Heart left ventricle (tissue), 16 donors: ENCODE measurements at regions of chr17 and their contacts with region 1.

Region 1: DNA sequence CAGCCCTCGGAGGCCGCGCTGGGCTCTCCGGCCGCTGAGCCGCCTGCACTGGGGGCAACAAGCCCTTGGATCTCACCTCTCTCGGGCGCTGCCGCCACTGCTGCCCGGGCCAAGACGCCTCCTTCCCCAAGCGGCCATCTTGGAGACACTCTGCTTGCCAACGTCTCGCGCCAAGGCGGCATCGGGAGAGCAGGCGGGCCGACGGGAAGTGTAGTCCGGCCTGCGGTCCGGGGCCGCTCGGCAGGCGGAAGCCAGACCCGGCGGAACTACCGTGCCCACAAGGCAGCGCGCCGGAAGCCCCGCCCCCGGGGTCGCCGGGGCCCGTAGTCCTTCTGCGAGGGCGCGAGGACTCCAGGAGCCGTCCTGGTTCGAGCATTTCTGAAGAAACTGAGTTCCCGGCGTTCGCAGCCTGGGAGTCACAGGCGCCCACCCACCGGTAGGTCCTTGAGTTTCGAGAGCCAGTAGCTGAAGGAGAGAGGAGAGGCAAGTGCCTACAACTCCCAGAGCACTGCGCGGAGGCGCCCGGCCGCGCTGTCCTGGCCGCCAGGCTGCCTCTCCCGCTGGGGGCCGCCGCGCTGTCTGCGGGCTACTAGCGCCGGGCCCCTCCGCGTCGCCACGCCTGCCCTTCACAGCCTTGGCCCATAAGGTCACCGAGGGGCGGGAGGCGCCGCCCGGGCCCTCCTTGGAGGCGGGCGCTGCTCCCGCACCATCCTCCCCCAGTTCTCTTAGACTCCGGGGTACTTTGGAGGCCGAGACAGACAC is at the start of gene TMEM11:
- DNase-seq: peak; percentile 96 to 99 (median 98)
- ATAC-seq: peak; percentile 92 to 96 (median 96)
- H3K4me3 ChIP-seq: peak within 1 kb of the TSS; percentile 65 to 100 (median 89)
- H3K27ac ChIP-seq: peak within 1 kb of the TSS; percentile 88 to 99 (median 97)
- H3K4me1 ChIP-seq: peaks cover 6 to 58% (median 49%) of the 10 kb centered on the region in 12 donors
- H3K27me3 ChIP-seq: no peaks in the 10 kb centered on the region
- CTCF ChIP-seq: peak in 5 of 12 donors; percentile 16 to 42 (median 29)
- POLR2A ChIP-seq: peak in 1 of 2 donors; percentile 70
- total RNA-seq, gene TMEM11: 23.2 to 46.6 (median 32.0) TPM

Region 2: GRCh38 chr17:21043286-21044232 is 170.6 kb before region 1 on chr17:
- intact Hi-C with region 1: loop called in 2 of 10 experiments (anchors 2 to 5 kb)
- DNase-seq: peak; percentile 99
- ATAC-seq: peak; percentile 93 to 98 (median 97)
- H3K4me3 ChIP-seq: peak overlapping the region; percentile 28 to 97 (median 71)
- H3K27ac ChIP-seq: peak overlapping the region; percentile 82 to 100 (median 96)
- H3K4me1 ChIP-seq: peaks cover 0 to 42% (median 29%) of the 10 kb centered on the region in 12 donors
- H3K27me3 ChIP-seq: no peaks in the 10 kb centered on the region
- CTCF ChIP-seq: peak; percentile 72 to 98 (median 90)
- POLR2A ChIP-seq: peak in 1 of 2 donors; percentile 77

Region 3: GRCh38 chr17:21119247-21119918 is 94.8 kb before region 1 on chr17:
- intact Hi-C with region 1: loop called in 4 of 10 experiments (anchors 2 to 10 kb)
- DNase-seq: peak; percentile 67 to 75 (median 70)
- ATAC-seq: peak; percentile 47 to 86 (median 79)
- H3K4me3 ChIP-seq: peak overlapping the region in 4 of 12 donors; percentile 8 to 31 (median 17)
- H3K27ac ChIP-seq: peak overlapping the region in 2 of 12 donors; percentile 58 to 68
- H3K4me1 ChIP-seq: peaks cover 0 to 19% (median 4%) of the 10 kb centered on the region in 12 donors
- H3K27me3 ChIP-seq: no peaks in the 10 kb centered on the region
- CTCF ChIP-seq: peak; percentile 73 to 88 (median 78)
- POLR2A ChIP-seq: no peak

Region 4: DNA sequence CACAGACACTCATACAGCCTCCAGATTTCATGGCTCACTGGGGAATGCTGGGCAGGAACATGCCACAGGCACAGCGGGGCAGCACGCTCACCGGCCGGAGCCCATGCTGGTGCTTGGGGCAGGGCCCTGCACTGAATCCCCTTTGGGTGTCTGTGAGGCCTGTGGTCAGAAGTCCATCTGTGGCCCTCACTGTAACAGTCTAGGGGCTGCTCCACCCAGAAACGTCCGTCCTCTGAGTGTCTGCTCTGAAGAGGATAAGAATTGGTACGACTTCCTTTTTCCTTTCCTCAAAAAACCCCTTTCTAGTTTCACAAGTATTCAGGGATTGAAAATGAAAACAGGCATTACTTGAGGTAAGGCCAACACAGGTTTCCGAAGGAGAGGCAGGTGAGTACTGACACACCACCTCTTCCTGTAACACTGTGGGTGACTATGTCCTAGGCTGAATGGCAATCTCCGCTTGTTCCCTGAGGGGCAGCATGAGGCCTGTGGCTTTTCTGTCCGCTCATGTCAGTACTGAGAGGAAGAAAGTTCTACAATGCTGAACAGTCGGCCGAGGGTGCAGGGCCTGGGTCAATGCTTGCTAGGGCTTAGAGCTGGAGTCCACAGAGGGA is 42.8 kb before region 1 on chr17:
- intact Hi-C with region 1: loop called in 5 of 10 experiments (anchors 2 to 5 kb)
- DNase-seq: no peak
- ATAC-seq: no peak
- H3K4me3 ChIP-seq: no peak overlapping the region
- H3K27ac ChIP-seq: peak overlapping the region in 7 of 12 donors; percentile 14 to 64 (median 31)
- H3K4me1 ChIP-seq: peaks cover 0 to 67% (median 45%) of the 10 kb centered on the region in 12 donors
- H3K27me3 ChIP-seq: no peaks in the 10 kb centered on the region
- CTCF ChIP-seq: no peak
- POLR2A ChIP-seq: no peak

Region 5: GRCh38 chr17:21252796-21253645 is 38.8 kb after region 1 on chr17 and contains the start of gene NATD1:
- intact Hi-C with region 1: loop called in 4 of 10 experiments (anchors 2 to 5 kb)
- DNase-seq: peak; percentile 86 to 94 (median 91)
- ATAC-seq: peak; percentile 64 to 89 (median 78)
- H3K4me3 ChIP-seq: peak within 1 kb of the TSS; percentile 39 to 91 (median 64)
- H3K27ac ChIP-seq: peak within 1 kb of the TSS; percentile 23 to 87 (median 72)
- H3K4me1 ChIP-seq: peaks cover 0 to 53% (median 38%) of the 10 kb centered on the region in 12 donors
- H3K27me3 ChIP-seq: no peaks in the 10 kb centered on the region
- CTCF ChIP-seq: no peak
- POLR2A ChIP-seq: peak in 1 of 2 donors; percentile 50
- total RNA-seq, gene NATD1: 12.8 to 38.4 (median 19.8) TPM

Region 6: GRCh38 chr17:21275579-21276263 is 61.5 kb after region 1 on chr17:
- intact Hi-C with region 1: loop called in 1 of 10 experiments (anchors 2 kb)
- DNase-seq: peak; percentile 95 to 98 (median 96)
- ATAC-seq: peak; percentile 94 to 98 (median 97)
- H3K4me3 ChIP-seq: peak overlapping the region; percentile 40 to 81 (median 64)
- H3K27ac ChIP-seq: peak overlapping the region; percentile 14 to 87 (median 74)
- H3K4me1 ChIP-seq: peaks cover 0 to 36% (median 16%) of the 10 kb centered on the region in 12 donors
- H3K27me3 ChIP-seq: no peaks in the 10 kb centered on the region
- CTCF ChIP-seq: peak in 3 of 12 donors; percentile 8 to 10 (median 9)
- POLR2A ChIP-seq: peak in 1 of 2 donors; percentile 60

Region 7: DNA sequence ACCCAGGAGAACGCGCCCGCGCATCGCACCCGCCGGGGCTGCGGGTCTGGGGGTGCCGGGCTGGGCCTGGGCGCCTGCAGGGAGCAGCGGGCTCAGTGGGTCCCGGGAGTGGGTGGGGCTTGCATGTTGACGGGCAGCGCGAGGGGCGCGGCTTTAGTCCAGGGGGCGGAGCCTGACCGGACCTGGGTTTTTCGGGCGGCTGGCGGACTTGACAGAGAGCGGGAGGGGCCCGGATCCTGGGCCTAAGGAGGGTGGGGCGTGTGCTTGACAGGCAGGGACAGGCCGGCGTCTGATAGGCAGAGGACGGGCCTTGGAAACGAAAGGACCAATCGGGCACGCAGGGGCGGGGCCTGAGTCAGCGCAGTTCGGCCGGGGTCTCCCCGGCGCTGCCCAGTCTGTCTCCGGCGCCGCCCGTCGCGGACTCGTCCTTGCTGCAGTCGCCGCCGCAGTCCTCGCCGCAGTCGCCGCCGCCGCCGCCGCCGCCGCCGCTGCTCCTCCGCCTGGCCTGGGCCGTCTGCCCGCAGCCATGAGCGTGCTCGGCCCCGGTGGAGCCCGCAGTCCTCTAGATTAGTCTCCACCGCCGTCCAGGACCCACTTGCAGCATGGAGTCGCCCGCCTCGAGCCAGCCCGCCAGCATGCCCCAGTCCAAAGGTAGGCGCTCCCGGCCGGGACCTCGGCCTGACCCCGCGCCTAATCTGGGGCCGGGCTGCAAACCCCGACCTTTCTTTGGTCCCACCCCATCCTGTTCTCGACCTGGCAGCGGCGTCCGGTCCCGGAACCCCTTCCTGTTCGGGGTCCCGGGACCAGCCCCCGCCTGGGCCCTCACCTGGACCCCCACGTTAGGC is 70.3 kb after region 1 on chr17 and contains the start of gene MAP2K3:
- intact Hi-C with region 1: loop called in 1 of 10 experiments (anchors 2 kb)
- DNase-seq: peak; percentile 99 to 100 (median 100)
- ATAC-seq: peak; percentile 79 to 89 (median 86)
- H3K4me3 ChIP-seq: peak within 1 kb of the TSS; percentile 49 to 99 (median 92)
- H3K27ac ChIP-seq: peak within 1 kb of the TSS; percentile 83 to 99 (median 94)
- H3K4me1 ChIP-seq: peaks cover 16 to 72% (median 50%) of the 10 kb centered on the region in 12 donors
- H3K27me3 ChIP-seq: no peaks in the 10 kb centered on the region
- CTCF ChIP-seq: peak in 1 of 12 donors; percentile 12
- POLR2A ChIP-seq: peak; percentile 90 to 99
- total RNA-seq, gene MAP2K3: 29.4 to 170 (median 54.4) TPM